Caco-2 (cell line): ENCODE measurements at regions of chr11 and their contacts with region 1.

Region 1: GRCh38 chr11:126810776-126811175 is 189.8 kb downstream of the KIRREL3 start:
- DNase-seq: no peak
- H3K4me3 ChIP-seq: no peak overlapping the region
- H3K4me3 Mint-ChIP-seq: no peak overlapping the region
- H3K27ac Mint-ChIP-seq: no peak overlapping the region
- H3K4me1 ChIP-seq: no peaks in the 10 kb centered on the region
- H3K4me1 Mint-ChIP-seq: no peaks in the 10 kb centered on the region
- H3K27me3 ChIP-seq: no peaks in the 10 kb centered on the region; the same call in 1 of the 2 replicates
- H3K27me3 Mint-ChIP-seq: peaks cover 15% of the 10 kb centered on the region
- CTCF ChIP-seq: no peak

Region 2: GRCh38 chr11:126989942-126990715 is 179.4 kb after region 1 on chr11:
- CTCF ChIA-PET with region 1: interaction called, 5 read pairs
- POLR2A ChIA-PET with region 1: no interaction called
- intact Hi-C with region 1: loop called (anchors 1 kb)
- DNase-seq: peak; percentile 83 to 84
- H3K4me3 ChIP-seq: no peak overlapping the region
- H3K4me3 Mint-ChIP-seq: no peak overlapping the region
- H3K27ac Mint-ChIP-seq: no peak overlapping the region
- H3K4me1 ChIP-seq: no peaks in the 10 kb centered on the region
- H3K4me1 Mint-ChIP-seq: no peaks in the 10 kb centered on the region
- H3K27me3 ChIP-seq: no peaks in the 10 kb centered on the region
- H3K27me3 Mint-ChIP-seq: peaks cover 36% of the 10 kb centered on the region
- CTCF ChIP-seq: peak; percentile 98 to 99